Mammary epithelial cell (primary cell): ENCODE measurements at regions of chr12 and their contacts with region 1.

Region 1: GRCh38 chr12:82383930-82384552 is 25.7 kb downstream of the METTL25 start:
- DNase-seq: peak; percentile 17
- H3K4me3 ChIP-seq: no peak overlapping the region
- H3K27ac ChIP-seq: no peak overlapping the region
- H3K4me1 ChIP-seq: no peaks in the 10 kb centered on the region
- H3K27me3 ChIP-seq: no peaks in the 10 kb centered on the region
- CTCF ChIP-seq: peak; percentile 56 to 65

Region 2: DNA sequence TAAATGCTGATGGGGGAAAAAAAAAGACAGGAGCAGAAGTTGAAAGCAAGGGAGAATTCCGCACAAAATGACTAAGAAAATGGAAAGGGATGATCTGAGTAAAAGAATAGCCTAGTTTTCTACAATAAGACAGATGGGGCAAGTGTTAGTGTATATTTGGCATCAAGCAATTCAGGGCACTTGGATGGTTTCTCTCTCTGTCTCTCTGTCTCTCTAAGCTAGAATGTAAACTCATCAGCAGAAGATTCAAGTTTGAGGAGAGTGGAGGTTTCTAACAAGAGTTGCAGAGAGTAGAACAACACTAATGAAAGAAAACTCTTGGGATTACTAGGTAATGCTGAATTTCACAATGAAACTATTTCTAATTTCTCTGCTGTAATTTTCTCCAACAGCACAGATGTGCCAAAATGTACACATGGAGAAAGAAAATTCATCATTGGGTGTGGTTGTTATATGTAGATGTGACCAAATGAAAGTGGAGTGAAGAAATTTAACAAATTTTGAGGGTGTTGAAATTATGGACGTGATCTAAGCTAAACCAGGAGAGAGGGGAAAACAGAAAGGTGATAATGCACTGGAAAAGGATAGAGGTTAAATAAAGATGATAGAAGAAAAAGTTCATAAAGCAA is 1069.0 kb before region 1 on chr12:
- CTCF ChIA-PET with region 1: no interaction called
- dilution Hi-C with region 1: no loop called
- in situ Hi-C with region 1: no loop called
- intact Hi-C with region 1: no loop called
- DNase-seq: no peak
- H3K4me3 ChIP-seq: no peak overlapping the region
- H3K27ac ChIP-seq: no peak overlapping the region
- H3K4me1 ChIP-seq: no peaks in the 10 kb centered on the region
- H3K27me3 ChIP-seq: no peaks in the 10 kb centered on the region
- CTCF ChIP-seq: no peak

Region 3: GRCh38 chr12:82517797-82518196 is 133.8 kb after region 1 on chr12:
- CTCF ChIA-PET with region 1: no interaction called
- dilution Hi-C with region 1: no loop called
- in situ Hi-C with region 1: no loop called
- intact Hi-C with region 1: loop called (anchors 2 kb)
- DNase-seq: no peak
- H3K4me3 ChIP-seq: no peak overlapping the region
- H3K27ac ChIP-seq: no peak overlapping the region
- H3K4me1 ChIP-seq: no peaks in the 10 kb centered on the region
- H3K27me3 ChIP-seq: no peaks in the 10 kb centered on the region
- CTCF ChIP-seq: peak in 1 of 2 donors; percentile 2

Region 4: GRCh38 chr12:82527165-82527780 is 143.2 kb after region 1 on chr12:
- CTCF ChIA-PET with region 1: no interaction called
- dilution Hi-C with region 1: no loop called
- in situ Hi-C with region 1: no loop called
- intact Hi-C with region 1: loop called (anchors 1 kb)
- DNase-seq: peak; percentile 41
- H3K4me3 ChIP-seq: no peak overlapping the region
- H3K27ac ChIP-seq: no peak overlapping the region
- H3K4me1 ChIP-seq: no peaks in the 10 kb centered on the region
- H3K27me3 ChIP-seq: peaks cover 5% of the 10 kb centered on the region
- CTCF ChIP-seq: peak; percentile 88 to 94

Region 5: DNA sequence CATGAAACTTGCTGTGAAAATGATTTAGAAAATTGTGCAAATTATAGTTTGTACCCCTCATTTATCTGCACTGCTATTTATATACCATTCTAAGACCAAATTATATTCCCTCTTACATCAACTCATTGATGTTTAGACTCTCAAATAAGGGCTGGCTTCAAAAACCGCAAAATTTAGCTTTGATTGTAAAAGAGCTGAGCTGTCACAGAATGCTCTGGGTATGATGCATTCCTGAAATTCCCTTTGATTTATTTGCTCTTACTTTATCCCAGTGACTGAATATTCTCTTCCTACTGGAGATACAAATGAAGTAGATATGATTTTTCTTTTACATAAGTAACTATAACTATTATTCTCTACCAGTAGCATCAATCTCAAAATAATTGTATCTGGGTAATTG is 224.7 kb after region 1 on chr12:
- CTCF ChIA-PET with region 1: no interaction called
- dilution Hi-C with region 1: no loop called
- in situ Hi-C with region 1: loop called in 1 of 2 experiments (anchors 25 kb)
- intact Hi-C with region 1: no loop called
- DNase-seq: peak; percentile 25
- H3K4me3 ChIP-seq: no peak overlapping the region
- H3K27ac ChIP-seq: no peak overlapping the region
- H3K4me1 ChIP-seq: no peaks in the 10 kb centered on the region
- H3K27me3 ChIP-seq: peaks cover 2% of the 10 kb centered on the region
- CTCF ChIP-seq: no peak

Region 6: GRCh38 chr12:82627569-82628198 is 243.6 kb after region 1 on chr12:
- CTCF ChIA-PET with region 1: no interaction called
- dilution Hi-C with region 1: no loop called
- in situ Hi-C with region 1: loop called (anchors 25 kb)
- intact Hi-C with region 1: loop called (anchors 1 kb)
- DNase-seq: peak; percentile 30
- H3K4me3 ChIP-seq: no peak overlapping the region
- H3K27ac ChIP-seq: no peak overlapping the region
- H3K4me1 ChIP-seq: no peaks in the 10 kb centered on the region
- H3K27me3 ChIP-seq: no peaks in the 10 kb centered on the region
- CTCF ChIP-seq: peak; percentile 54 to 68